CD4-positive, alpha-beta memory T cell (primary cell): ENCODE measurements at regions of chr12 and their contacts with region 1.

Region 1: GRCh38 chr12:12999959-13000615 is at the start of gene HEBP1:
- DNase-seq: peak; percentile 92 to 95 (median 93)
- H3K4me3 ChIP-seq: peak within 1 kb of the TSS; percentile 61 to 81
- H3K4me3 Mint-ChIP-seq: peak within 1 kb of the TSS; percentile 82 to 97 (median 90)
- H3K27ac ChIP-seq: peak within 1 kb of the TSS; percentile 64
- H3K27ac Mint-ChIP-seq: peak within 1 kb of the TSS; percentile 82 to 95 (median 90)
- H3K4me1 ChIP-seq: peaks cover 26% of the 10 kb centered on the region
- H3K4me1 Mint-ChIP-seq: peaks cover 20 to 44% (median 30%) of the 10 kb centered on the region in 4 donors
- H3K27me3 ChIP-seq: no peaks in the 10 kb centered on the region
- H3K27me3 Mint-ChIP-seq: no peaks in the 10 kb centered on the region
- total RNA-seq, gene HEBP1: 11.3 to 13.9 TPM

Region 2: DNA sequence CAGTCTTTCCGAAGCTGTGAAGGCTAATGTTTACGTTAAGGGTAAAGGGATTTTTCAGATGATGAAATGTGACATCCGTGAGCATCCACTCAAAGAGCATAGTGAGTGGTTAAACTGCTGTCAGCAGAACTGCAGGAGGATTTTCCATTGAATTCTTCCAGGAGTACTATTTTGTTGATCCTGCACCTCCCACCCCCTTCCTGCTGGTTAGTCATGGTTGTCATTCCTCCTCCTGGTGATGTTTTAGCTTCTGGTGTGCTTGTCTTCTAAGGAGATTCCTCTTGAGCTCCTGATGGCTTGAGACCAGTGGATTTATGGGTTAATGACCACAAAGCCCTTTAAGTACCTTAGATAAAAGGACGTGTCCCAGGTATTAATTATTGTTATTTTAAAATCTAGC is 45.7 kb before region 1 on chr12:
- CTCF ChIA-PET with region 1: no interaction called
- POLR2A ChIA-PET with region 1: no interaction called
- intact Hi-C with region 1: no loop called
- DNase-seq: no peak
- H3K4me3 ChIP-seq: no peak overlapping the region
- H3K4me3 Mint-ChIP-seq: no peak overlapping the region
- H3K27ac ChIP-seq: no peak overlapping the region
- H3K27ac Mint-ChIP-seq: no peak overlapping the region
- H3K4me1 ChIP-seq: no peaks in the 10 kb centered on the region
- H3K4me1 Mint-ChIP-seq: no peaks in the 10 kb centered on the region
- H3K27me3 ChIP-seq: no peaks in the 10 kb centered on the region
- H3K27me3 Mint-ChIP-seq: peaks cover 6 to 8% of the 10 kb centered on the region in 2 donors

Region 3: DNA sequence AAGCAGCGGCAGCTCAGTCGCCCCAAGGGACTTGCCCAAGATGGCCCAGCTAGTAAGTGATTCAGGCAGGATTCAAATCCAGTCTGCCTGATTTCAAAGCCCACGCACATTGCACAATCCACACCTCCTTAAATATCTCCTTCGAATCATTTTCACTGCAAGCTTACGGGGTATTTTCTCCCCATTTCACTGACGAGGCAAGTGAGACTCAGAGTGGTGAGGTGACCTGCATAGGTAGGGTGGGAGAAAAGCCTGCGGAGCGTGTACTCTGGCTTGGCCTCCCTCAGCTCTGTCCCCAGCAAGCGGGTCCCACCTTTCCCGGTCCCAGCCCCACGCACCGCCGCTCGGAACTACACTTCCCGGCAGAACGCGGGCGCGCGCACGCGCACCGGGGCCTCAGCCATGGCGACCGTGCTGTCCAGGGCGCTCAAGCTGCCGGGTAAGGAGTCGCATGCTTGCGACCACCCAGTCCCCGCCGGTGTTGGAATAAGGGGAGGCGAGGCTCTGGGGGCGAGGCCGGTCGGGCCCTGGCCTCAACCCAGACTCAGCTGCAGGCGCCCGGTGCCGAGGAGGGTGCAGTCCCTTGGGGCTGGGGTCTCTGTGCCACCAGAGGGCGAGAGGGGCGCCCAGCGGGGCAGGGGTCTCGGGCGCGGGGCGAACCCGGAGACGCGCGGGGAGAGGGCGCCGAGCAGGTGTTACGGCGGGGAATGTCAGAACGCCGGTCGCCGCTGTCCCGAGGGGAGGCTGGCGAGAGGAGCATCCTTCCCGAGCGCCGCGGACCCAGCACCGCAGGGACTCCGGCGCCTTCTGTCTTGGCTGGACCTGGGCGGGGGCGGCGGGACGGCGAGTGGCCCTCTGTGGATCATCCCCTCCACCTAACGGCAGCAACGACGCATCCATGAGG is 44.2 kb after region 1 on chr12 and contains the start of gene FAM234B:
- CTCF ChIA-PET with region 1: interaction called, 3 read pairs
- POLR2A ChIA-PET with region 1: interaction called, 4 read pairs
- intact Hi-C with region 1: loop called (anchors 1 kb)
- DNase-seq: peak; percentile 57 to 68 (median 59)
- H3K4me3 ChIP-seq: peak within 1 kb of the TSS; percentile 42 to 84
- H3K4me3 Mint-ChIP-seq: peak within 1 kb of the TSS; percentile 82 to 89 (median 87)
- H3K27ac ChIP-seq: peak within 1 kb of the TSS; percentile 43
- H3K27ac Mint-ChIP-seq: peak within 1 kb of the TSS in 6 of 7 donors; percentile 36 to 88 (median 72)
- H3K4me1 ChIP-seq: peaks cover 13% of the 10 kb centered on the region
- H3K4me1 Mint-ChIP-seq: peaks cover 4 to 9% (median 6%) of the 10 kb centered on the region in 4 donors
- H3K27me3 ChIP-seq: no peaks in the 10 kb centered on the region
- H3K27me3 Mint-ChIP-seq: peaks cover 0 to 9% of the 10 kb centered on the region in 2 donors
- total RNA-seq, gene FAM234B: 3.9 to 4.0 TPM